ENCODE measurements at regions of chr9 and their contacts with region 1.

Region 1: DNA sequence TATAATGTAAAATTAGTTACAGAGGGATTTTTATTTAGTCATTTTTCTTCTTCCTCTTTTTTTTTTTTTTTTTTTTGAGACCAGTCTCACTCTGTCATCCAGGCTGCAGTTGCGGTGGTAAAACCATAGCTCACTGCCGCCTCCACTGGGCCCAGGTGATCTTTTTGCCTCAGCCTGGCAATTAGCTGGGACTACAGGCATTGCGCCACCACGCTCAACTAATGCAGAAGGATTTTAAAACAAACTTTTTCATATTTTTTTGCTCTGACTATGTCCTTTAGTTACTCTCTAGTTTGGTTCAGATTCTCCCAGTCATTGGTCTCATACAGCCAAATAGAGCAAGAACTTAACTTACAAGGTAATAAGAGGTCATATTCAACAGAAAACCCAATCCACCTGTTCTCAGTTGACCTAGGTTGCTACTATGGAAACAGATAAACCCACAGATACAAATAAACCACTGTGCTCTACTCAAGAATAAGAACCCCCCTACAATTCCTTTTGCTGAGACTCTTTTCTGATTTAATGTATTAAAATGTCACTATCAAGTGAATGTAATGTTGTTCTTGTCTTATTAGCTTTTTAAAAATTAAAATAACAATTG is 50.1 kb upstream of the TTC39B start:
- DNase-seq: peak; percentile 62
- H3K4me3 Mint-ChIP-seq: no peak overlapping the region
- H3K27ac Mint-ChIP-seq: no peak overlapping the region
- H3K4me1 Mint-ChIP-seq: peaks cover 9% of the 10 kb centered on the region
- H3K27me3 Mint-ChIP-seq: no peaks in the 10 kb centered on the region

Region 2: DNA sequence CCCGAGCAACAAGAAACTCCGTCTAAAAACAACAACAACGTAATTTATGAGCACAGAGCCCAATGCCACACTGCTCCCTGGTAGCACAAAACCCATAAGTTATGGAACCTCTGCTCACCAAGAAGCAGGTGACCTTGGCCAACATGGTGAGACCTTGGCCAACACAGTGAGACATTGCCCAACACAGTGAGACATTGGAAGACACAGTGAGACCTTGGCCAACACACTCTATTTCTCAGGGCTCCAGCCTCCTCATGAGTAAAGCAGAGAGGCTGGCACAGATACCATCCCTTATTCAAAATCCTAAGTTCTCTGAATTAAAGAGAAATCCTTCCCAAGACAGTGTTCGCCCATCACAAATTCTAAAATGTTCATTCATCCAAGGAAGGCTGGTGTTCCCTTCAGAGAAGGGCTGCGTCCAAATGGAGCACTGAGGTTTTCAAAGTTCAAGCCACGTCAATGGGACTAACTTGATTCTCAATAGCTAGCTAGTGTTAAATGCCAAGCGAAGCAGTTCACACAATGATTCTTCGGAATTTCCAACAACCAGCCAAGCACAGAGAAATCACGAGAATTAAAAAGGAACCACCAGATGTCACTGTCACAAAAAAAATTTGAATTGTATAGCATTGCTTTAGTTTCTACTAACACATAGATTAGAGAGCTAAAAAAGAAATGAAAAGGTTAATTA is 79.6 kb before region 1 on chr9:
- CTCF ChIA-PET with region 1: interaction called, 5 read pairs
- intact Hi-C with region 1: loop called (anchors 2 kb)
- DNase-seq: no peak
- H3K4me3 Mint-ChIP-seq: no peak overlapping the region
- H3K27ac Mint-ChIP-seq: no peak overlapping the region
- H3K4me1 Mint-ChIP-seq: peaks cover 39% of the 10 kb centered on the region
- H3K27me3 Mint-ChIP-seq: no peaks in the 10 kb centered on the region

Region 3: DNA sequence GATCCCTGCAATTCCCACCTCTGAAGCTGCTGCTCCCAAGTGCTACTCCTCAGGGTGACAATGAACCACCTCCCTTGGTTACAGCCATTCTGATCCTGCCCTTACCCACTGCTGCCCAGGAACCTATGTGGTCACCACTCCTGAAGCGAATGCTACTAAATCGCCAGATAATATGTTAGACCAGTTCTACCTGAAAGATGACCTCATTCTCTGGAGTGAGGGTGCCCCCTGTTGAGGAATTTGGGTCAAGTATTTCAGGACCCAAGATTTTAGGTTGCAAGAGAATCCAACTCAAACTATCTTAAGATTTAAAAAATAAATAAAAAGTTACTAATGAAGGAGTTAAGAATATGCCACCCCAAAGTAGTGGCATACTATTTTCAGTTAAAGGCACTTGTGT is 59.7 kb after region 1 on chr9:
- CTCF ChIA-PET with region 1: interaction called, 4 read pairs
- intact Hi-C with region 1: loop called (anchors 1 kb)
- DNase-seq: peak; percentile 67
- H3K4me3 Mint-ChIP-seq: no peak overlapping the region
- H3K27ac Mint-ChIP-seq: no peak overlapping the region
- H3K4me1 Mint-ChIP-seq: no peaks in the 10 kb centered on the region
- H3K27me3 Mint-ChIP-seq: no peaks in the 10 kb centered on the region

Region 4: GRCh38 chr9:15430920-15431844 is 74.0 kb after region 1 on chr9:
- CTCF ChIA-PET with region 1: no interaction called
- intact Hi-C with region 1: no loop called
- DNase-seq: no peak
- H3K4me3 Mint-ChIP-seq: no peak overlapping the region
- H3K27ac Mint-ChIP-seq: no peak overlapping the region
- H3K4me1 Mint-ChIP-seq: peaks cover 25% of the 10 kb centered on the region
- H3K27me3 Mint-ChIP-seq: no peaks in the 10 kb centered on the region

Region 5: DNA sequence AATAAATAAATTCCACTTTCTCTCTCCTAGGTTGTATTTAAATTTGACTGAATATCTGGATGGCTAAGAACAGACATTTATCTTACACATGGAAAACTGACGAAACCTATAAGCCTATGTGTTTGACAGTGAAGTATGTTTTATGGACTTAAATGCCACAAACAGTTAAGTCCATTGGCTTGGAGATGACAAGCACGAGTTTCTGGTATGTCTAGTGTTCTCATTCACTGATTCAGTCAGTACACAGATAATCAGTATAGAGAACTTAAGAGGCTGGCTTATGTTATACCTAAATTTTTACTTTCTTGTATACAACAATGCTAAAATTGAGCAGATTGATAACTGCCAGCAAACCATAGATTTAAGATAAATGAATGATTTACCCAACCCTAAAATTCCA is 104.4 kb after region 1 on chr9:
- CTCF ChIA-PET with region 1: no interaction called
- intact Hi-C with region 1: no loop called
- DNase-seq: no peak
- H3K4me3 Mint-ChIP-seq: no peak overlapping the region
- H3K27ac Mint-ChIP-seq: no peak overlapping the region
- H3K4me1 Mint-ChIP-seq: no peaks in the 10 kb centered on the region
- H3K27me3 Mint-ChIP-seq: no peaks in the 10 kb centered on the region

Region 6: GRCh38 chr9:15510789-15511575 is 153.8 kb after region 1 on chr9 and contains the start of gene PSIP1:
- CTCF ChIA-PET with region 1: no interaction called
- intact Hi-C with region 1: loop called (anchors 1 kb)
- DNase-seq: peak; percentile 91
- H3K4me3 Mint-ChIP-seq: peak within 1 kb of the TSS; percentile 92
- H3K27ac Mint-ChIP-seq: peak within 1 kb of the TSS; percentile 98
- H3K4me1 Mint-ChIP-seq: peaks cover 51% of the 10 kb centered on the region
- H3K27me3 Mint-ChIP-seq: no peaks in the 10 kb centered on the region
- total RNA-seq, gene PSIP1: 161 to 164 TPM

Region 7: GRCh38 chr9:15606643-15607472 is 249.7 kb after region 1 on chr9:
- CTCF ChIA-PET with region 1: no interaction called
- intact Hi-C with region 1: loop called (anchors 1 kb)
- DNase-seq: no peak
- H3K4me3 Mint-ChIP-seq: no peak overlapping the region
- H3K27ac Mint-ChIP-seq: no peak overlapping the region
- H3K4me1 Mint-ChIP-seq: no peaks in the 10 kb centered on the region
- H3K27me3 Mint-ChIP-seq: no peaks in the 10 kb centered on the region

Measured in activated naive CD4-positive, alpha-beta T cell treated with anti-CD3 and anti-CD28 coated beads for 36 hours (primary cell).